ENCODE measurements at regions of chr19 and their contacts with region 1.

Region 1: DNA sequence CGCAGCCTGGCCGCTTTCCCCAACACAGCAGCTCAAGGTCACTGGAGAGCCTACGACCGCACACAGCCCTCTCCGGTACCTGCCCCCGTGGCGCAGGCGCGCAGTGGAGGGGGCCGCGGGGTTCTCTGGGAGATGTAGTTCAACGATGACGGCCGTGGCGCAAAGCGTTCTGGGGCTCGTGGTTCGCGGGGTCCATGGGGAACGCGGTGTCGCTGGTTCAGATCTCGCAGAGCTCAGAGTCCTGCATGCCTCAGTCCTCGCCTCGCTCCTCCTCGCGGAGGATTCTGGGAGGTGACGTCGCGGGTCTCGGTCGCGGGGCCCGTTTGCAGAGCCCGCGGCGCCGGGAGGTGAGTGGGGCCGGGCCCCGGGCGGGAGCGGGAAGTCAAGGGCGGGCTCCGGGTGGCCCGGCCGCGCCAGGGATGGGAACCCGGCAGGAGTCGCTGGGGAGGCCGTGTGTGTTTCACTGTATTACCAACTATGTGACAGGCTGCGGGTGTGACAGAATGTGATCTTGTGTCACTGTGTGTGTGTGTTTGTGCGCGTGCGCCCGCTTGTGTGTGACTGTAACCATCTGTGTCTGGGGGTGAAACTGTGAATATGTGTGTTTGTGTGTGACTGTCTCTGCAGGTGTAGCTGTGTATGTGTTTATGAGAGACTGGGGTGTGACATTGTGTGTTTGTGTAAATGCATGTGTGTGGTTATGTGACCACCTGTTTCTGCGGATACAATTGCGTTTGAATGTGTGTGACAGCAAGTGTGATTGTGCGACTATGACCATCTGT is at the start of gene ZNF527:
- DNase-seq: peak; percentile 93 to 98 (median 96)
- ATAC-seq: peak; percentile 96
- H3K4me3 ChIP-seq: peak within 1 kb of the TSS; percentile 59
- H3K4me3 Mint-ChIP-seq: peak within 1 kb of the TSS; percentile 96
- H3K27ac ChIP-seq: peak within 1 kb of the TSS; percentile 76 to 85
- H3K27ac Mint-ChIP-seq: peak within 1 kb of the TSS; percentile 96
- H3K4me1 ChIP-seq: peaks cover 17% of the 10 kb centered on the region
- H3K4me1 Mint-ChIP-seq: peaks cover 16% of the 10 kb centered on the region
- H3K27me3 ChIP-seq: no peaks in the 10 kb centered on the region
- H3K27me3 Mint-ChIP-seq: no peaks in the 10 kb centered on the region
- CTCF ChIP-seq: no peak
- total RNA-seq, gene ZNF527: 7.8 to 8.4 TPM

Region 2: DNA sequence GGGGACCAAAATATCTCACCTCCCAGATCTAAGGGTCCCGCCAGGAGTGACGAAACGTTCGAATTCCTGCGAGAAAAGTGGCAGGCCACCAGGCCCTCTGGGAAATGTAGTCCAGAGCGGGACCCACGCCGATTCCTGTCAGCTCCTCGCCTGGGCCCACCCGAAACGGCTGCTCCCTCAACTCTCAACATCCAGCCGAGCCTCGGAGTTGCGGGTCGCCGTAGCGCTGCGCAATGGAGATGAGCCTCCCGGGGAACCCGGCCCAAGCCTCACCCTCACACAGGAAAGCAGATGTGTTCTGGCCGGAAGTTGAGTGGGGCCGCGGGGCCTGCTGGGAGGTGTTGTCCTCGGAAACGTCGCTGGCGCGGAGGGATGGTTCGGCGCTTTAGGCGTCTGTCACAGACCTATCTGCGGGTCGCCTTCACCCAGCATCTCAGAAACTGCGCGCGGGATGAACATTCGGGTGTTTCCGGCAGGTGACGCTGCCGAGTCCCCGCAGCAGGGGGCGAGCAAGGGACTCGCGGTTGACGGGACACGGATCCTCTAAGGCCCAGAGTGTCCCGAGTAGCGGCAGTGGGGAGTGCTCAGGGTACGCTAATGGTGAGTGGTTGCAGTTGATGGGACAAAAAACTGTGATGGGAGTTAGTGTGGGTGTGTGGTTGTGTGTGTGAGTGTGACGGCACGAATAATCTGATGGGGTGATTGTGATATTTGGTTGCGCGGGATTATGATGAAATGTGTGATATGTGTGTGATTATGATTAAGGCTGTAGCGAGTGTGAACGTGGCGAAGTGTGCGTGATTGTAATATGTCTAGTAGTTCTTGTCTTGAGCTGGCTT is 454.9 kb before region 1 on chr19 and contains the starts of genes ZNF568 and ZNF829:
- CTCF ChIA-PET with region 1: no interaction called
- POLR2A ChIA-PET with region 1: no interaction called
- intact Hi-C with region 1: loop called in 1 of 2 experiments (anchors 5 kb)
- DNase-seq: peak; percentile 83 to 97 (median 90)
- ATAC-seq: peak; percentile 97
- H3K4me3 ChIP-seq: peak within 1 kb of the TSS; percentile 92
- H3K4me3 Mint-ChIP-seq: peak within 1 kb of the TSS; percentile 90
- H3K27ac ChIP-seq: peak within 1 kb of the TSS; percentile 89 to 97
- H3K27ac Mint-ChIP-seq: peak within 1 kb of the TSS; percentile 88
- H3K4me1 ChIP-seq: peaks cover 19% of the 10 kb centered on the region
- H3K4me1 Mint-ChIP-seq: peaks cover 44% of the 10 kb centered on the region
- H3K27me3 ChIP-seq: no peaks in the 10 kb centered on the region
- H3K27me3 Mint-ChIP-seq: no peaks in the 10 kb centered on the region
- CTCF ChIP-seq: peak; percentile 74
- total RNA-seq, gene ZNF568: 3.0 to 4.2 TPM
- total RNA-seq, gene ZNF829: 3.8 to 4.4 TPM

Region 3: GRCh38 chr19:37172368-37173366 is 198.4 kb before region 1 on chr19 and contains the start of gene ZNF585A:
- CTCF ChIA-PET with region 1: no interaction called
- POLR2A ChIA-PET with region 1: no interaction called
- intact Hi-C with region 1: loop called in 1 of 2 experiments (anchors 5 kb)
- DNase-seq: peak; percentile 83 to 98 (median 89)
- ATAC-seq: peak; percentile 99
- H3K4me3 ChIP-seq: peak within 1 kb of the TSS; percentile 77
- H3K4me3 Mint-ChIP-seq: no peak within 1 kb of the TSS
- H3K27ac ChIP-seq: peak within 1 kb of the TSS; percentile 63 to 73
- H3K27ac Mint-ChIP-seq: no peak within 1 kb of the TSS
- H3K4me1 ChIP-seq: peaks cover 11% of the 10 kb centered on the region
- H3K4me1 Mint-ChIP-seq: no peaks in the 10 kb centered on the region
- H3K27me3 ChIP-seq: no peaks in the 10 kb centered on the region
- H3K27me3 Mint-ChIP-seq: no peaks in the 10 kb centered on the region
- CTCF ChIP-seq: no peak
- total RNA-seq, gene ZNF585A: 4.5 to 4.6 TPM

Region 4: GRCh38 chr19:37227996-37228395 is 143.1 kb before region 1 on chr19:
- CTCF ChIA-PET with region 1: no interaction called
- POLR2A ChIA-PET with region 1: no interaction called
- intact Hi-C with region 1: no loop called
- DNase-seq: peak in 6 of 14 experiments; percentile 8 to 48 (median 28)
- ATAC-seq: no peak
- H3K4me3 ChIP-seq: no peak overlapping the region
- H3K4me3 Mint-ChIP-seq: no peak overlapping the region
- H3K27ac ChIP-seq: no peak overlapping the region
- H3K27ac Mint-ChIP-seq: no peak overlapping the region
- H3K4me1 ChIP-seq: peaks cover 3% of the 10 kb centered on the region
- H3K4me1 Mint-ChIP-seq: peaks cover 4% of the 10 kb centered on the region
- H3K27me3 ChIP-seq: no peaks in the 10 kb centered on the region
- H3K27me3 Mint-ChIP-seq: no peaks in the 10 kb centered on the region
- CTCF ChIP-seq: peak; percentile 35

Region 5: DNA sequence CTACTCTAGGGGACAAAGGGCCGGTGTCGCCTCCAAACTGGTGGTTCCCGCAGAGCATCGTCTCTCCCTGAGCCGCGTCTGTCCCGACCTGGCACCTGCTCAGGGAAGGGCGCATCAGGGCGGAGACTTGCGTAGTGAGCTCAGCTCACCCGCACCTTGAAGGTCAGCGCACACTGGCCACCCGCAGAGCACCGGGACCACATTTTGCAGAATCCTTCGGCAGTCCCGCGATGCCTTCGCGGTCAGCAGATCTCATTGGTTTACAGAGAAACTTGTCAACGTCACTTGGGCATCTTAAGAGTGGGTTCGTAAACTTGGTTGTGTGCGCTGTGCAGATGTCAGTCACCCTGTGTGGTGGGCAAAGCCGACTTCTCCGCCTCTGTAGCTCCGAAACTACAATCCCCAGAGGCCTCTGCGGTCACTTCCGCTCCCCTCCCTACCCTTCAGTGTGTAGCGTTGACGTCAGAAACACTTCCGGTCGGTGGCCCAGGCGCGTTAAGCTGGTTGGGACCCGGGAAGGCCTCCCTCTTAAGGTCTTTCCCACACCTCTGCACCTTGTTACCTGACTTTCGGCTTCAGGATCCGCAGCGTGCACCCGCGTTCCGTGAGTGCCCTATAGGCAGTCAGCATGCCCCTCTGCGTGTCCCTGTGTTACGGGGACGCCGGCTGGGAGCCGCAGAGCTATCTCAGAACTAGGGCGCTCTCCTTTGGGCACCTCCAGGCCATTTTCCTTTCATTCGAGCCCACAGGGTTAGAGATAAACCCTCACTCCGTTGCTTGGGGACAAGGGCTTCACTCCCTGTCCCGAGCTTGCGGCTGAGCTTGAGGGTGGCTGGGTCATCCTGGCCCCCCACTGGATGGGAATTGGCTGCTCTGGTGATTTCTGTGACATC is 36.6 kb before region 1 on chr19:
- CTCF ChIA-PET with region 1: no interaction called
- POLR2A ChIA-PET with region 1: interaction called, 28 read pairs
- intact Hi-C with region 1: loop called (anchors 1 kb)
- DNase-seq: peak; percentile 76 to 96 (median 85)
- ATAC-seq: peak; percentile 99
- H3K4me3 ChIP-seq: peak overlapping the region; percentile 66
- H3K4me3 Mint-ChIP-seq: peak overlapping the region; percentile 92
- H3K27ac ChIP-seq: peak overlapping the region; percentile 54 to 69
- H3K27ac Mint-ChIP-seq: peak overlapping the region; percentile 95
- H3K4me1 ChIP-seq: peaks cover 20% of the 10 kb centered on the region
- H3K4me1 Mint-ChIP-seq: peaks cover 40% of the 10 kb centered on the region
- H3K27me3 ChIP-seq: no peaks in the 10 kb centered on the region
- H3K27me3 Mint-ChIP-seq: no peaks in the 10 kb centered on the region
- CTCF ChIP-seq: no peak

Region 6: GRCh38 chr19:37594304-37594981 is 223.4 kb after region 1 on chr19 and contains the starts of genes ZNF540 and ZNF571:
- CTCF ChIA-PET with region 1: no interaction called
- POLR2A ChIA-PET with region 1: interaction called, 33 read pairs
- intact Hi-C with region 1: loop called (anchors 2 to 5 kb)
- DNase-seq: peak; percentile 86 to 96 (median 91)
- ATAC-seq: peak; percentile 95
- H3K4me3 ChIP-seq: peak within 1 kb of the TSS; percentile 93
- H3K4me3 Mint-ChIP-seq: peak within 1 kb of the TSS; percentile 97
- H3K27ac ChIP-seq: peak within 1 kb of the TSS; percentile 94 to 97
- H3K27ac Mint-ChIP-seq: peak within 1 kb of the TSS; percentile 98
- H3K4me1 ChIP-seq: peaks cover 15% of the 10 kb centered on the region
- H3K4me1 Mint-ChIP-seq: peaks cover 39% of the 10 kb centered on the region
- H3K27me3 ChIP-seq: no peaks in the 10 kb centered on the region
- H3K27me3 Mint-ChIP-seq: no peaks in the 10 kb centered on the region
- CTCF ChIP-seq: no peak
- total RNA-seq, gene ZNF540: 11.6 to 12.0 TPM
- total RNA-seq, gene ZNF571: 6.7 to 7.0 TPM